Activated B cell treated with CpG ODN at 0.5 μM for 24 hours (primary cell): ENCODE measurements at regions of chr1 and their contacts with region 1.

Region 1: DNA sequence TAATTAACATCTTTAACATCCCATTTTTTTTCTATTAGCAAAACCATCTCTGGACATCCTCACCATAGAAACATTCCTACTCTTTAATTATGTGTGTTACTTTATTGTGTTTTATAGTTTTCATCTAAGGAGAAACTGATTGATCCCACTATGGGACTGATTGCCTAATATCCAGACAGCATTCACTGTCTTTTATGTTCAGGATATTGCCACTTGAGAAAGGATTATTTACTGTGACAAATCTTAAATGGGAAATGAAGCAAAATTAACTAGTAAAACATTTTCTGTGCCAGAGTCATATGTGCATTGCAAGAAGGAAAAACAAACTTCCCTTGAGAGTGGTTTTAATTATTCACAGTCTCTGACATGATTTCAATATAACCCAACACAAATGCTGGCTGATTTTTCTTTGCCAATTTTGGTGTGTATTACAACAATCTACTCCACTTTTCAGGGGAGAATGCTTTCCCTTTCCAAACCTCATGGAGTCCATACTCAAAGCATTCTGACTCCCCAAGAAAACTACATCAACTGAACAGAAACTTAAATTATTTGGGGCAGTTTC is 15.8 kb upstream of the RGS13 start:
- DNase-seq: no peak
- ATAC-seq: no peak
- H3K4me3 Mint-ChIP-seq: no peak overlapping the region
- H3K27ac Mint-ChIP-seq: no peak overlapping the region
- H3K4me1 Mint-ChIP-seq: no peaks in the 10 kb centered on the region
- H3K27me3 Mint-ChIP-seq: peaks cover 55% of the 10 kb centered on the region
- CTCF ChIP-seq: no peak

Region 2: GRCh38 chr1:192530254-192530653 is 89.9 kb before region 1 on chr1:
- CTCF ChIA-PET with region 1: no interaction called
- POLR2A ChIA-PET with region 1: interaction called, 14 read pairs
- intact Hi-C with region 1: no loop called
- DNase-seq: no peak
- ATAC-seq: peak; percentile 98
- H3K4me3 Mint-ChIP-seq: peak overlapping the region; percentile 60
- H3K27ac Mint-ChIP-seq: peak overlapping the region; percentile 65
- H3K4me1 Mint-ChIP-seq: peaks cover 23% of the 10 kb centered on the region
- H3K27me3 Mint-ChIP-seq: no peaks in the 10 kb centered on the region
- CTCF ChIP-seq: no peak

Region 3: GRCh38 chr1:192592981-192593708 is 27.0 kb before region 1 on chr1:
- CTCF ChIA-PET with region 1: no interaction called
- POLR2A ChIA-PET with region 1: no interaction called
- intact Hi-C with region 1: no loop called
- DNase-seq: no peak
- ATAC-seq: no peak
- H3K4me3 Mint-ChIP-seq: no peak overlapping the region
- H3K27ac Mint-ChIP-seq: no peak overlapping the region
- H3K4me1 Mint-ChIP-seq: no peaks in the 10 kb centered on the region
- H3K27me3 Mint-ChIP-seq: peaks cover 2% of the 10 kb centered on the region
- CTCF ChIP-seq: no peak